ENCODE measurements at regions of chr20 and their contacts with region 1.

Region 1: DNA sequence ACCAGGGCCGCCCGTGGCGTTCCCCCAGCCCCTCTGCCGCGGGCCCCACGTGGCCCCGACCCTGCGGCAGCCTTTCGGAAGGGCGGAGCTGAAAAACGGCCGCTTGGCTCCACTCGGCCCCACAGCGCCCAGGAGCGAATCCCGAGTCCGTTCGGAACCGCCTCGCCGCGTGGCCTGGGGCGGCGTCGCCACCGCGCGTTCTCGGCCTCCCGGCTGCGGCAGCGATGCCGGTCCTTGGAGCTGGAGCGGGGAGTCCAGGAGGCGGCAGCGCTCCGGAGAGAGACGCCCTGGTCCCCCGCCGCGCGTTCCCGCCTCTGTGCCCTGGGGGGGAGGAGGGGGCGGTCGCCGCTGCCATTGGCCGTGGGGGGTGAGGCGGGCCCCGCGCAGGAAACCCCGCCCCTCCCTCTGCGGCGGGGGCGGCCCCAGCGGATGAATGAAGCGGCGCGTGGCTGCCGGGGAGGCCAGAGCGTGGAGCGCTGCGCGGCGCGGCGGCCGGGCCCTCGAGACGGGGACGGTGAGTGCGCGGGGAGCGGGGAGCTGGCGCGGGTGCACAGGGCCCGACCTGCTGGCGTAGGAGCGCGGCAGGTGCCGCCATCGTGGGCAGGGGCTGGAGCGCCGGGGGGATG is at the start of gene SLCO4A1:
- DNase-seq: peak; percentile 87
- H3K4me3 Mint-ChIP-seq: peak within 1 kb of the TSS; percentile 87
- H3K27ac Mint-ChIP-seq: no peak within 1 kb of the TSS
- H3K4me1 Mint-ChIP-seq: peaks cover 10% of the 10 kb centered on the region
- H3K27me3 Mint-ChIP-seq: peaks cover 1% of the 10 kb centered on the region
- total RNA-seq, gene SLCO4A1: 22.4 to 22.6 TPM

Region 2: GRCh38 chr20:62350093-62350628 is 292.0 kb before region 1 on chr20:
- CTCF ChIA-PET with region 1: no interaction called
- intact Hi-C with region 1: no loop called
- DNase-seq: no peak
- H3K4me3 Mint-ChIP-seq: no peak overlapping the region
- H3K27ac Mint-ChIP-seq: no peak overlapping the region
- H3K4me1 Mint-ChIP-seq: no peaks in the 10 kb centered on the region
- H3K27me3 Mint-ChIP-seq: no peaks in the 10 kb centered on the region

Region 3: DNA sequence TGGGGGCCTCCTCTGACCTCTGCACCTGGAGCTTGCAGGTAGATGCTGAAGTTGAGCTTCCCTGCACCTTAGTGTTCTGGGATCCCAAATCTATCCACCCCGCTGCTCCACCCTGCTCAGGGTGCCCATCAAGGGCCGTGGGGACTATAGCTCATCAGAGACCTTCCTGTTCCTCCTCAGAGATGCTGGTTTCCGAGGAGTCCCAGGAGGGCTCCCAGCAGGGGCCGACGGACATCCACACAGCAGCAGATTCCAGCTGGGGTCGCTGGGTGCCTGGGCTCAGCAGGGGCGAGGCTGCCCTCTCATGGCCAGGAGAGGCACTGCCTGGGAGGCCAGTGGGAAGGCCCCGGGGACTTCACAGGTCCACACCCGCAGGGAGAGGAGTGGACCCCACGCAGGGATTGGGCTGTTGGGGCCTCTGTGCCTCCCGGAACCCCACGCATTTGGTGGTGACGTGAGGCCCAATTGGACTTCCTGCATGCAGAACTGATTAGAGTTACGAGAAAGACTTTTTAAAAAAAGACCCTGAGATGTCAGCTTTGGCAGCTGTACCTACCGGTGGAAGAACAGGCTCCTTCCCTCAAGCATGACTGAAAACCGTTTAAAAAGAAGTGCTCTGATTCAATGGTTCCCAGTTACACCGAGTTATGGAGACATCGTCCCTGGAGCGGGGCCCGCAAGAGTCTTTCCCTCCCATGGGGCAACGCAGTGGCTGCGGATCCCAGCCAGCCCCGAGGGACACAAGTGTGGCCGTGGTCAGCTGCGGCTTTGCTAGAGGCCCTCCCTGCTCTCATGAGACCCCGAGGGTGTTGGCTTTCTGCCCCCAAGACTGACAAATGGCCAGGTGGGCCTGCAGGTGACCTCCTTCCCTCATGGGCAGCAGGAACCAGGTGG is 25.2 kb before region 1 on chr20:
- CTCF ChIA-PET with region 1: interaction called, 12 read pairs
- intact Hi-C with region 1: no loop called
- DNase-seq: peak; percentile 85
- H3K4me3 Mint-ChIP-seq: peak overlapping the region; percentile 52
- H3K27ac Mint-ChIP-seq: peak overlapping the region; percentile 84
- H3K4me1 Mint-ChIP-seq: peaks cover 27% of the 10 kb centered on the region
- H3K27me3 Mint-ChIP-seq: no peaks in the 10 kb centered on the region

Region 4: GRCh38 chr20:62623488-62624324 is 18.4 kb before region 1 on chr20:
- CTCF ChIA-PET with region 1: interaction called, 12 read pairs
- intact Hi-C with region 1: loop called (anchors 1 kb)
- DNase-seq: peak; percentile 95
- H3K4me3 Mint-ChIP-seq: peak overlapping the region; percentile 74
- H3K27ac Mint-ChIP-seq: peak overlapping the region; percentile 94
- H3K4me1 Mint-ChIP-seq: peaks cover 23% of the 10 kb centered on the region
- H3K27me3 Mint-ChIP-seq: no peaks in the 10 kb centered on the region

Region 5: GRCh38 chr20:62723351-62723750 is 81.2 kb after region 1 on chr20:
- CTCF ChIA-PET with region 1: no interaction called
- intact Hi-C with region 1: loop called (anchors 5 kb)
- DNase-seq: no peak
- H3K4me3 Mint-ChIP-seq: no peak overlapping the region
- H3K27ac Mint-ChIP-seq: no peak overlapping the region
- H3K4me1 Mint-ChIP-seq: peaks cover 19% of the 10 kb centered on the region
- H3K27me3 Mint-ChIP-seq: peaks cover 2% of the 10 kb centered on the region

Region 6: DNA sequence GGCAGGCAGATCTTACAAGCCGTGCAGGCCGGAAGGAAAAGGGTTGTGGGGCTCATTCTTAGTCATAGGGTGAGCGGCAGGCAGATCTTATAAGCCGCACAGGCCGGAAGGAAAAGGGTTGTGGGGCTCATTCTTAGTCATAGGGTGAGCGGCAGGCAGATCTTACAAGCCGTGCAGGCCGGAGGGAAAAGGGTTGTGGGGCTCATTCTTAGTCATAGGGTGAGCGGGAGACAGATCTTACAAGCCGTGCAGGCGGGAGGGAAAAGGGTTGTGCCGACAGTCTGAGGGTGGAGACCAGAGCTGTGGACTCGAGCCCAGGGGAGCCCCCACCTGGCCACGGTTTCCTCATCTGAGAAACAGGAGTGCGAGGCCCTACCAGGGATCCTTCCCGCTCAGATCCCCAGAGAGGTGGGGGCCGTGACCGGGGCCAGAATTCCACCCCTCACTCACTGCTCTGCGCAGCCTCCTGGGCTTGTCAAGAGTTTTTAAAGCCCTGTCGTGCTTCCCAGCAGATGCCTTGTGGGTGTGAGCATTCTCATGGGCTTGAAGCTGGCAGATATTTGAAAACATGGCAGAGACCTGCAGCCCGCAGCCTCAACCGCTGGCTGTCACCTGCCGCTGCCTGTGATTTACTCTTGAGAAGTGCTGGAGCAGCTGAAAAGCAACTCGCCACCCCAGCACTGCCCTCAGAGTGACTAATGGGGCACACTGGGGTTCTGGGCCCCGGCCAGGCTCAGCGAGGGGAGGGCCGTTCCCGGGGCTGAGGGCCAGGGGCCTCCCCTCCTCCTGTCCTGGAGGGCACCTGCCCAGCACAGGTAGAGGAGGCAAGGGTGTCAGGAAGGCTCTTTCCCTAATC is 98.4 kb after region 1 on chr20:
- CTCF ChIA-PET with region 1: no interaction called
- intact Hi-C with region 1: loop called (anchors 2 kb)
- DNase-seq: peak; percentile 86
- H3K4me3 Mint-ChIP-seq: peak overlapping the region; percentile 38
- H3K27ac Mint-ChIP-seq: peak overlapping the region; percentile 47
- H3K4me1 Mint-ChIP-seq: peaks cover 28% of the 10 kb centered on the region
- H3K27me3 Mint-ChIP-seq: no peaks in the 10 kb centered on the region

Region 7: GRCh38 chr20:62776692-62777527 is 134.8 kb after region 1 on chr20:
- CTCF ChIA-PET with region 1: no interaction called
- intact Hi-C with region 1: loop called (anchors 5 kb)
- DNase-seq: peak; percentile 89
- H3K4me3 Mint-ChIP-seq: peak overlapping the region; percentile 67
- H3K27ac Mint-ChIP-seq: peak overlapping the region; percentile 92
- H3K4me1 Mint-ChIP-seq: peaks cover 53% of the 10 kb centered on the region
- H3K27me3 Mint-ChIP-seq: no peaks in the 10 kb centered on the region

Measured in activated naive CD4-positive, alpha-beta T cell treated with anti-CD3 and anti-CD28 coated beads for 36 hours (primary cell).